Activated B cell treated with CpG ODN at 0.5 μM for 24 hours (primary cell): ENCODE measurements at regions of chr15 and their contacts with region 1.

Region 1: DNA sequence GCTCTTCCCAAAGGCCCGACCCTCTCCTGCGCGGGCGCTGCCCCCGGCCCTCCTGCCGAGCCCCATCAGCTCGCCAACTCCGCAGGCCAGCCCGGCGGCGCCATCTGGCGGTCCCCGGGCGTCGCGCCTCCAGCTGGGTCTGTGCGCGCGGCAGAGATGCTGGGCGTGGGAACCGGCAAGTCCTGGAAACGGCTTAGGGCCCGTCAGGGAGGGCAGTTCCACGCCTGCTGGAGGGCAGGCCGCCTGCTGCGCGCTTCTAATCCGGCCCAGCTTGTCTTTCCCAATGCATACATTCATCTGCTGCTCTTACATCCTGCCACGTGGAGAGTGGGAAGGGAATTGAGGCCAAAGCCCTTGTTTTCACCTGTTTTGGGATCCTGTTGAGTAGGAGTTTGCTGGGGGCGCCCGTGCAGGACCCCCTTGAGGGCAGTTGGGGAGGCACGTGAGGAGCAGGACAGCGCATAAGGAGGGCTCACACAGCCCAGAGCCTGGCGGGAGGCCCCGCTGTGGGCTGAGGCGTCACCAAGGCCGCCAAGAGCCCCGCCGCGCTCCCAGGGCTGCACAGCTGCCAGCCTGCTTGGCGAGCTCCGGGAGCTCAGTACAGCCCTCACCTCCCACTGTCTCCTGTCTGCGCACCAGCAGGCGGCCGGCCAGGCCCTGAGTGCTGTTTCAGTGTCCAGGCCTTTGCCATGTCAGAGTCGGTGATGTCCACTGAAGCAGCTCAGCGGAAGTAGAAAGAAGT is 165.6 kb downstream of the NSMCE3 start:
- DNase-seq: no peak
- ATAC-seq: no peak
- H3K4me3 Mint-ChIP-seq: no peak overlapping the region
- H3K27ac Mint-ChIP-seq: no peak overlapping the region
- H3K4me1 Mint-ChIP-seq: no peaks in the 10 kb centered on the region
- H3K27me3 Mint-ChIP-seq: peaks cover 3% of the 10 kb centered on the region
- CTCF ChIP-seq: no peak

Region 2: GRCh38 chr15:28960979-28961378 is 143.0 kb before region 1 on chr15:
- CTCF ChIA-PET with region 1: no interaction called
- POLR2A ChIA-PET with region 1: no interaction called
- intact Hi-C with region 1: no loop called
- DNase-seq: no peak
- ATAC-seq: no peak
- H3K4me3 Mint-ChIP-seq: no peak overlapping the region
- H3K27ac Mint-ChIP-seq: no peak overlapping the region
- H3K4me1 Mint-ChIP-seq: no peaks in the 10 kb centered on the region
- H3K27me3 Mint-ChIP-seq: no peaks in the 10 kb centered on the region
- CTCF ChIP-seq: no peak

Region 3: DNA sequence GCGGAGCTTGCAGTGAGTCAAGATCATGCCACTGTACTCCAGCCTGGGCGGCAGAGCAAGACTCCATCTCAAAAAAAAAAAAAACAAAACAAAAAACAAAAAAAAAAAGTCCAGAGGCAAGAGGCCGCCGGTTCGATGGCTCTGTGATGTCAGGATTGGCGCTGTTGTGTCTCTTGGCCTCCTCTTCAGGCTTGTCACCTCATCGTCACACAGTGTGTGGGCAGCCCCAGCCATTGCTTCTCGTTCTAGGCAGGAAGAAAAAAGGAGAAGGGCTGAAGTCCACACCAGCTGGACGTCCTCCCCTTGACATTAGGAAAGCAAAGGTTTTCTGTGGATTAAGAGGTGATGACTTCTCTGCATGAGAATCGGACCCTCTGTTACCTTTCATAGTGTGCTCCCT is 25.5 kb before region 1 on chr15:
- CTCF ChIA-PET with region 1: no interaction called
- POLR2A ChIA-PET with region 1: no interaction called
- intact Hi-C with region 1: no loop called
- DNase-seq: no peak
- ATAC-seq: no peak
- H3K4me3 Mint-ChIP-seq: no peak overlapping the region
- H3K27ac Mint-ChIP-seq: no peak overlapping the region
- H3K4me1 Mint-ChIP-seq: no peaks in the 10 kb centered on the region
- H3K27me3 Mint-ChIP-seq: no peaks in the 10 kb centered on the region
- CTCF ChIP-seq: no peak

Region 4: DNA sequence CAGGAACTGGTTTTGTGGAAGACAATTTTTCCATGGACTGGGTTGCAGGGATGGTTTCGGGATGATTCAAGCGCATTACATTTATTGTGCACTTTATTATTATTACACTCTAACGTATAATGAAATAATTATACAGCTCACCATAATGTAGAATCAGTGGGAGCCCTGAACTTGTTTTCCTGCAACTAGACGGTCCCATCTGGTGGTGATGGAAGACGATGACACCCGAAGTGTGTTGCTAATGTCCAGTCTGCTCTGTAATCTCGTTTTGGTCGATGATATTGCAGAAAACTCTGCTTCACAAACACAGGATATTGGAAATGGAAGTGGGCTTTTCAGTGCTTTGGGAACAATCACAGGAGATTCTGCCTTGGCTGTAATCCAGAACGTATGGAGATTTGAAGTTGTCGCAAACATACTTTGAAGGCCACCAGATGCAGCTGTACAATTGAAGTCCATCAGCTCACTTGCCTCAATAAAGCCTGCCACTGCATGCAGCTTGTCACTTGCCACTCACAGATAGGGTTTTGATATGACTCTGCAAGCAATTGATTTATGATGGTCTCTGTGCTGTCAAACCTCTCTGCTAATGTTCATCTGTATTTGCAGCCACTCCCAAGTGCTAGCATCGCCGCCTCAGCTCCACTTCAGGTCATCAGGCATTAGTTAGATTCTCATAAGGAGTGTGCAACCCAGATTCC is 576.6 kb after region 1 on chr15:
- CTCF ChIA-PET with region 1: interaction called, 3 read pairs
- POLR2A ChIA-PET with region 1: no interaction called
- intact Hi-C with region 1: loop called (anchors 5 kb)
- DNase-seq: no peak
- ATAC-seq: no peak
- H3K4me3 Mint-ChIP-seq: no peak overlapping the region
- H3K27ac Mint-ChIP-seq: no peak overlapping the region
- H3K4me1 Mint-ChIP-seq: no peaks in the 10 kb centered on the region
- H3K27me3 Mint-ChIP-seq: peaks cover 17% of the 10 kb centered on the region
- CTCF ChIP-seq: no peak

Region 5: GRCh38 chr15:29740692-29741311 is 636.8 kb after region 1 on chr15:
- CTCF ChIA-PET with region 1: no interaction called
- POLR2A ChIA-PET with region 1: no interaction called
- intact Hi-C with region 1: loop called (anchors 2 kb)
- DNase-seq: no peak
- ATAC-seq: no peak
- H3K4me3 Mint-ChIP-seq: no peak overlapping the region
- H3K27ac Mint-ChIP-seq: no peak overlapping the region
- H3K4me1 Mint-ChIP-seq: no peaks in the 10 kb centered on the region
- H3K27me3 Mint-ChIP-seq: no peaks in the 10 kb centered on the region
- CTCF ChIP-seq: no peak